ENCODE measurements at regions of chr1 and their contacts with region 1.

Region 1: GRCh38 chr1:70896224-70896623 is 151.4 kb downstream of the PTGER3 start:
- DNase-seq: no peak
- ATAC-seq: 0 out of 3 replicates have a peak, but pooled peaks have one; percentile 29
- H3K4me3 ChIP-seq: no peak overlapping the region
- H3K27ac ChIP-seq: no peak overlapping the region
- H3K4me1 ChIP-seq: no peaks in the 10 kb centered on the region
- H3K27me3 ChIP-seq: no peaks in the 10 kb centered on the region
- CTCF ChIP-seq: 0 out of 2 replicates have a peak, but pooled peaks have one; percentile 16
- EP300 ChIP-seq: no peak
- POLR2A ChIP-seq: no peak
- RAD21 ChIP-seq: no peak

Region 2: GRCh38 chr1:70685300-70686241 is 210.7 kb before region 1 on chr1:
- CTCF ChIA-PET with region 1: no interaction called
- POLR2A ChIA-PET with region 1: no interaction called
- in situ Hi-C with region 1: no loop called
- intact Hi-C with region 1: loop called (anchors 1 kb)
- DNase-seq: peak; percentile 68
- ATAC-seq: peak; percentile 99
- H3K4me3 ChIP-seq: no peak overlapping the region
- H3K27ac ChIP-seq: no peak overlapping the region
- H3K4me1 ChIP-seq: no peaks in the 10 kb centered on the region
- H3K27me3 ChIP-seq: no peaks in the 10 kb centered on the region
- CTCF ChIP-seq: peak; percentile 90
- EP300 ChIP-seq: no peak
- POLR2A ChIP-seq: no peak
- RAD21 ChIP-seq: peak; percentile 34; the same call in 1 of the 2 replicates